HEK293 (cell line): ENCODE measurements at regions of chr9 and their contacts with region 1.

Region 1: DNA sequence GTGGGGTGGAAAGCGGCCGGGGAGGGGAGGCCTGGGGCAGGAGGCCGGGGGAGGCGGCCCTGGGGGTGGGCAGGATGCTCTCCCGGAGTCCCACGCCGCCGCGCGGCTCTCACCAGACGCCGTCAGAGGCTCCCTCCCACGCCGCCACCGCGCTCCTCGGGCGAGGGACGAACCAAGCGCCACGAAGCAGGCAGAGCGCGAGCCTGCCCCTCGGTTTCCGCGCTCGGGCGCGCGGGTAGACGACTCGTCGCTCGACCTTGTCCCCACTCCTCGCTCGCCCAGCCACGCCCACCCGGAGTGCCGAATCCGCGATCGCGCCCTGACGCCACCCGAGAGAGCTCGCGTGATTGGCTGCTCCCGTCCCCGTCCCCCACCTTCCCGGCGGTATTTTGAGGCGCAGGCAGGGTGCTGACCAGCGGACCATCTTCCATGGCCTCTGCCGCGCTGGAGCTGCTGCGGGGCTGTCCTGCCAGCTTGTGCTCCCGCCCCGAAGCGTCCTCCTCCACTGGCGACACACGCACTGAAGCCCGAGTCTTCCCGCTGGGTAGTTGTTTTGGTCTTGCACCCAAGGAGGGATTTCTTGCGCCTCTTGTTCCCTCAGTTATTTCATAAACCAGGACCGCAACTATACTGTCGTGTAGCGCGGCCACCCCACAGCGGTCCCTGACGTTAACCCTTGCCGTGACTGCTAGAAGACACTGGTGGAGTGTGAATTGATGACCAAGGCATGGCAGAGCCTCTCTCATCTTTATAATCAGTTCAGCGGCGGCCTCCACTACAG is at the start of gene GNE:
- H3K4me3 ChIP-seq: peak within 1 kb of the TSS; percentile 74
- H3K27ac ChIP-seq: peak within 1 kb of the TSS; percentile 74
- H3K4me1 ChIP-seq: no peaks in the 10 kb centered on the region
- CTCF ChIP-seq: no peak; the same call in 1 of the 2 replicates

Region 2: GRCh38 chr9:36276781-36277181 is 18.4 kb after region 1 on chr9:
- CTCF ChIA-PET with region 1: no interaction called
- POLR2A ChIA-PET with region 1: interaction called, 10 read pairs
- H3K4me3 ChIP-seq: no peak overlapping the region
- H3K27ac ChIP-seq: no peak overlapping the region
- H3K4me1 ChIP-seq: no peaks in the 10 kb centered on the region; the same call in 1 of the 2 replicates
- CTCF ChIP-seq: no peak